Activated B cell treated with CpG ODN at 0.5 μM for 24 hours (primary cell): ENCODE measurements at regions of chr22 and their contacts with region 1.

Region 1: DNA sequence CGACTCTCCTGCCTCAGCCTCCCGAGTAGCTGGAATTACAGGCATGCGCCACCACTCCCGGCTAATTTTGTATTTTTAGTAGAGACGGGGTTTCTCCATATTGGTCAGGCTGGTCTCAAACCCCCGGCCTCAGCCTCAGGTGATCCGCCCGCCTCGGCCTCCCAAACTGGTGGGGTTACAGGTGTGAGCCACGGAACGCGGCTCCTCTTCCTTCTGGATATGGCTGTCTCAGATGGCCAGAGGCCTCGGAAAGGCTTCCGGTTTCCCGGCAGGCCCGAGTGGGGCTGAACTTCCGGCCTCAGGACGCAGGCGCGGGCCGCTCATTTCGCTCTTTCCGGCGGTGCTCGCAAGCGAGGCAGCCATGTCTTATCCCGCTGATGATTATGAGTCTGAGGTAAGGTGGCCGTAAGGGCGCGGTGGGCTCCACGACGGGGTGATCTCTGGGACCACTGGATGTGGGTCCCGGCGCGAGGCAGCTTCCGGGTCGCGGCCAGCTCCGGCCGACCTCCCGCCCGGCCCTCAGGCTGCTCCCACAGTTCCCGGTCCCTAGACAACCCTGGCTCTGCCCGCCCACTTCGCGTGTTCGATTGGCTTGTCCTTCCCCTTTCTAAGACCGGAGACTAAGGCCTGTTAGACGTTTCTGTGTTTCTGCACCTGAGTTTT is at the start of gene EIF3L:
- DNase-seq: peak; percentile 86
- ATAC-seq: peak; percentile 76
- H3K4me3 Mint-ChIP-seq: peak within 1 kb of the TSS; percentile 92
- H3K27ac Mint-ChIP-seq: peak within 1 kb of the TSS; percentile 99
- H3K4me1 Mint-ChIP-seq: peaks cover 39% of the 10 kb centered on the region
- H3K27me3 Mint-ChIP-seq: no peaks in the 10 kb centered on the region
- CTCF ChIP-seq: no peak
- total RNA-seq, gene EIF3L: 712 and 718 TPM in 2 replicates

Region 2: DNA sequence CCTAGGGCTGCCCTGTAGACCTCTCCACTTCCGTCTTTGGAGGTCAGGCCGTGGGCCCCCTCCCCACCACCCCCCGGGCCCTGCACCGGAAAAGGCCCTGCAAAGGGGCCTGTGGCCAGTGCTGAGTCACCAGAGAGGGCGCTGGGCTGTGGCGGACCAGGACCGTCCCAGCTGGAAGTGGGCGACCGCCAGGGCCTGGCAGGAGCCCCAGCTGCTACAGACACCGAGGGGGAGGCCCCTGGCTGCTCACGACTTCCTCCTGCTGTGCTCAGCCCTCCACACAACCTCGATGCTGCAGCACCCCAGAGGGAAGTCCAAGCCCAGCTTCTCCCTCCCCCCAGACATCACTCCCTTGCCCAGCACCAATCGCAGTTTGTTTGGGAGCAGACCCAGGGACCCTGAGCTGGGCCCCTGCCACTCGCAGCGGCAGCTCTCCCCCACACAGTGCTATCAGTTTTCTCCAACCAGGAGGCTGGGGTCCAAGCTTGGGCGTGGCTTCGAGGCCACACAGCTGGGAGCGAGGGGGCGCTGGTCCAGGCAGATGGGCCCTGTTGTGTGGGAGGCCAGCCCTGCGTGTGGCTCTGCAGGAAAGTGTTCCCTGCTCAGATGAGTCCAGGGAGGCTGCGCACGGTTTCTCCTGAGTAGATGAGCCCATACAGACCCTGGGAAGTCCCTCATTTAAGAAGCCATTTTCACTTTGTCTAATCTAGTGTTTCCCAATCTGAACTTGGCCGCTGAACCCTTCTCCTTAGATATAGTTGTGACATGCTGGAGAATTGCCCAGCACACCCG is 215.4 kb before region 1 on chr22:
- CTCF ChIA-PET with region 1: no interaction called
- POLR2A ChIA-PET with region 1: interaction called, 4 read pairs
- intact Hi-C with region 1: loop called (anchors 10 kb)
- DNase-seq: peak; percentile 69
- ATAC-seq: peak; percentile 78
- H3K4me3 Mint-ChIP-seq: peak overlapping the region; percentile 74
- H3K27ac Mint-ChIP-seq: peak overlapping the region; percentile 93
- H3K4me1 Mint-ChIP-seq: peaks cover 67% of the 10 kb centered on the region
- H3K27me3 Mint-ChIP-seq: no peaks in the 10 kb centered on the region
- CTCF ChIP-seq: no peak

Region 3: DNA sequence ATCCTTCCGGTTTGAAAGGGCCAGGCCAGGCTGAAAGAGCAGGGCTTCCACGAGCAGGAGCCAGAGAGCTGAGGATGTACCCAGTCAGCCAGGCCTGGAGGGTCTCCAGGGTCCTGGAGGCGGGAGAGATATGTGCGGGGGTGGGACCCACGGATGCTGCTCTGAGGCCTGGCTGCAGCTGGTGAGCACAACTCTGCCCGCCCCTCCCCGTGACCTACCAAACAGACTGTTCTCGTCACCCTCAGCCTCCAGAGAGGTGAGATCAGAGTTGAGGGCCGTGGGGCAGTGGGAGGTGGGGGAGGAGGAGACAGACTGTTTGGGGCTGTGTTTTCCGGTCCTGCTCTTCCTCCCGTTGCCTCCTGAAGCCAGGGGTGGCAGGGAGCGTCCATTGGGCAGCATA is 110.2 kb before region 1 on chr22:
- CTCF ChIA-PET with region 1: no interaction called
- POLR2A ChIA-PET with region 1: interaction called, 12 read pairs
- intact Hi-C with region 1: no loop called
- DNase-seq: no peak
- ATAC-seq: no peak
- H3K4me3 Mint-ChIP-seq: no peak overlapping the region
- H3K27ac Mint-ChIP-seq: no peak overlapping the region
- H3K4me1 Mint-ChIP-seq: no peaks in the 10 kb centered on the region
- H3K27me3 Mint-ChIP-seq: peaks cover 3% of the 10 kb centered on the region
- CTCF ChIP-seq: no peak

Region 4: GRCh38 chr22:37807410-37808293 is 41.6 kb before region 1 on chr22 and contains the start of gene GCAT:
- CTCF ChIA-PET with region 1: no interaction called
- POLR2A ChIA-PET with region 1: interaction called, 12 read pairs
- intact Hi-C with region 1: loop called (anchors 1 kb)
- DNase-seq: peak; percentile 73
- ATAC-seq: peak; percentile 98
- H3K4me3 Mint-ChIP-seq: peak within 1 kb of the TSS; percentile 70
- H3K27ac Mint-ChIP-seq: no peak within 1 kb of the TSS
- H3K4me1 Mint-ChIP-seq: peaks cover 43% of the 10 kb centered on the region
- H3K27me3 Mint-ChIP-seq: peaks cover 46% of the 10 kb centered on the region
- CTCF ChIP-seq: no peak
- total RNA-seq, gene GCAT: 0.40 and 0.83 TPM in 2 replicates

Region 5: GRCh38 chr22:37862570-37863325 is 13.5 kb after region 1 on chr22:
- CTCF ChIA-PET with region 1: interaction called, 14 read pairs
- POLR2A ChIA-PET with region 1: interaction called, 4 read pairs
- intact Hi-C with region 1: loop called (anchors 1 kb)
- DNase-seq: no peak
- ATAC-seq: no peak
- H3K4me3 Mint-ChIP-seq: no peak overlapping the region
- H3K27ac Mint-ChIP-seq: no peak overlapping the region
- H3K4me1 Mint-ChIP-seq: no peaks in the 10 kb centered on the region
- H3K27me3 Mint-ChIP-seq: no peaks in the 10 kb centered on the region
- CTCF ChIP-seq: no peak

Region 6: DNA sequence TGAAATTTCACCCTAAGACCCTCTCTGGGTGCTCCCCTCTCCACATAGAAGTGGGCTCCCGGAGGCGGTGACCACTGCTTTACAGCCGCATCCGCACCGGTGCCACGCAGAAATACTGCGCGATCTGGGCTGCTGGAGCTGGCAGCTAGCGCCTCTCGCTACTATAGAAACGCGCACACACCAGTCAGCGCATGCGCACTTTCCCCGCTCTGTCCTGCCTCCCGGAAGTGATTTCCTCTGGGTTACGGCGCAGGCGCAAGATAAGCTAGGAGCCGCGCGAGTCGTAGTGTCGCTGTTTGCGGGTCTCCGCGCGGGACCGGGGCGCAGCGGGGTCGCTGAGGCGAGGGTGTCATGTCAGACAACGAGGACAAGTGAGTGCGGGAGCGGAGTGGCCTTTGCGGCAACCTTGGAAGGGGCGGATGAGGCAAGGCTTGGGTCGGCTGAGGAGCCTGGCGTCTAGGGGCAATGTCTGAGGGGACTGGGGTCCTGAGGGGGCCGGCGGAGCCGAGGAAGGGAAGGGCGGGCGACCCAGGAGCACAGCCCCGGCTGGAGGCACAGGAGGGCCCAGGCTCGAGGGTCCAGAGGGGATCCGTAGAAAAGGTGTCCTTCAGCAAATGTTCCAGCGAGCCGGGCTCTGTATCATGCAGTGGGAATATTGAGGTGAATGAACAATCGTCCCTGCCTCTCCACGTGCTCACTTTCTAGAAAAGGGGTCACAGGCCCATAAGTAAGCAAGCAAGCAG is 104.4 kb after region 1 on chr22 and contains the starts of genes C22orf23 and POLR2F:
- CTCF ChIA-PET with region 1: no interaction called
- POLR2A ChIA-PET with region 1: interaction called, 3 read pairs
- intact Hi-C with region 1: loop called (anchors 1 kb)
- DNase-seq: peak; percentile 89
- ATAC-seq: peak; percentile 93
- H3K4me3 Mint-ChIP-seq: peak within 1 kb of the TSS; percentile 100
- H3K27ac Mint-ChIP-seq: peak within 1 kb of the TSS; percentile 95
- H3K4me1 Mint-ChIP-seq: peaks cover 30% of the 10 kb centered on the region
- H3K27me3 Mint-ChIP-seq: peaks cover 14% of the 10 kb centered on the region
- CTCF ChIP-seq: no peak
- total RNA-seq, gene C22orf23: 0.16 TPM in 1 of 2 replicates, not detected in the other
- total RNA-seq, gene POLR2F: 47.8 and 67.3 TPM in 2 replicates

Region 7: DNA sequence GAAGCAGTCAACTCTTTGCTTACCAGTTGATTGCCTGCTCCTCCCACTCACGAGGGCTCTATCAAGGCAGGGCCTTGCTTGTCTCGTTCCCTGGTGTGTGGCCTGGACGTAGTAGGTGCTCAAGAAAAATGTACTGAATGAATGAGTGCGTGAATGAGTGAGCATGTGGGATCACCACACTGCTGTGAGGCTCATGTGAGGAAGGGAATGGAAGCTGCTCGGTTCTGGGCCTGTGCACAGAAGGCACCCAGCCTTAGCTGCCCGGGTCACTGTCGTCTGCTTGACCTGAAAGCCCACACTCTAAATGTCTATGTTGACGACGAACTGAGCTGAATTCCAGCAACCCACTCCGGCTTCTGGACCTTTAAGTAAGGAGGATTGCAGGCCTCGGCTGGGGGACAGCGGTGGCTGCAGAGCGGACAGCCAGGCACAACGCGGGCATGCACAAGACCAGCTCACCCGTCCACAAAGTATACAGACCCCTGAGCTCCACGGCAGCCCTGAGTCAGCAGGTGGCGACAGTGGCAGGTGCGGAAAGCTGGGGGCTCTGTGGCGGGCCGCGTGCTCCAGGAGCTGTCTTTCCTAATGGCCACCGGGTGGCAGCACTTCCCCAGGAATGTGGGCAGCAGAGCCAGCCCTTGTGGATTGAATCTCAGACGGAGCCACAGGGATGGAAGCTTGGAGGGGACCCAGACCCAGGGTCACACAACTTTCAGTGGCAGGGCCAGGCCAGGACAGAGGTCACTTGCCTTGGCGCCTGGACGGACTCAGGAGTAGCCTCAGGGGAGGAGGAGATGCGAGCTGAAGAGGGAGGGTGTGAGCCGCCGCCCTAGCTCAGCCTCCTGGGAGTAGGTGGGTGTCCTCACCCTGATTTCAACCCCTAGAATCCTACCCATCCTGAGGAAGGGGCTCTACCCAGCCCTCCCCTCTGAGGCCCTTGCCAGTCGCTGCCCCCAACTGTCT is 203.0 kb after region 1 on chr22:
- CTCF ChIA-PET with region 1: no interaction called
- POLR2A ChIA-PET with region 1: no interaction called
- intact Hi-C with region 1: no loop called
- DNase-seq: peak; percentile 75
- ATAC-seq: peak; percentile 87
- H3K4me3 Mint-ChIP-seq: no peak overlapping the region
- H3K27ac Mint-ChIP-seq: no peak overlapping the region
- H3K4me1 Mint-ChIP-seq: peaks cover 14% of the 10 kb centered on the region
- H3K27me3 Mint-ChIP-seq: peaks cover 13% of the 10 kb centered on the region
- CTCF ChIP-seq: peak; percentile 75

Region 8: GRCh38 chr22:38246692-38247091 is 397.5 kb after region 1 on chr22:
- CTCF ChIA-PET with region 1: no interaction called
- POLR2A ChIA-PET with region 1: no interaction called
- intact Hi-C with region 1: no loop called
- DNase-seq: no peak
- ATAC-seq: no peak
- H3K4me3 Mint-ChIP-seq: no peak overlapping the region
- H3K27ac Mint-ChIP-seq: no peak overlapping the region
- H3K4me1 Mint-ChIP-seq: peaks cover 14% of the 10 kb centered on the region
- H3K27me3 Mint-ChIP-seq: no peaks in the 10 kb centered on the region
- CTCF ChIP-seq: no peak